Posterior vena cava (tissue), 2 donors: ENCODE measurements at regions of chr3 and their contacts with region 1.

Region 1: GRCh38 chr3:129183569-129184395 is at the start of gene CNBP:
- DNase-seq: peak; percentile 98
- total RNA-seq, gene CNBP: 267 to 284 TPM

Region 2: DNA sequence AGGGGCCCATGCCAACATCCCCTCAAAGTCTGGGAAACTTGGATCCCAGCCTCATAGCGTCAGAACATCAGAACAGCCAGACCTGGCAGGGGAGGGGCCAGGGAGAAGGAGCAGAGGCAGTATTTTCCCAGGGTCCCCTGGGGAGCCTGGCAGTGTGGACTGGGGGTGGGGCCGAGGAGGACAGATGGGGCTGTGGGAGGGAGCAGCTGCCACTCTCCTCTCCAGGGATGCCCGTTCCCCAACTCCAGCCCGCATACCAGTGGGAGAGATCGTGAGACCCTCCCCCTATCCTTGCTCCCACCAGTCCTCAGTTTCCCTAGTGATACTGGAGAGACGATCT is 710.6 kb before region 1 on chr3:
- intact Hi-C with region 1: no loop called
- DNase-seq: no peak

Region 3: DNA sequence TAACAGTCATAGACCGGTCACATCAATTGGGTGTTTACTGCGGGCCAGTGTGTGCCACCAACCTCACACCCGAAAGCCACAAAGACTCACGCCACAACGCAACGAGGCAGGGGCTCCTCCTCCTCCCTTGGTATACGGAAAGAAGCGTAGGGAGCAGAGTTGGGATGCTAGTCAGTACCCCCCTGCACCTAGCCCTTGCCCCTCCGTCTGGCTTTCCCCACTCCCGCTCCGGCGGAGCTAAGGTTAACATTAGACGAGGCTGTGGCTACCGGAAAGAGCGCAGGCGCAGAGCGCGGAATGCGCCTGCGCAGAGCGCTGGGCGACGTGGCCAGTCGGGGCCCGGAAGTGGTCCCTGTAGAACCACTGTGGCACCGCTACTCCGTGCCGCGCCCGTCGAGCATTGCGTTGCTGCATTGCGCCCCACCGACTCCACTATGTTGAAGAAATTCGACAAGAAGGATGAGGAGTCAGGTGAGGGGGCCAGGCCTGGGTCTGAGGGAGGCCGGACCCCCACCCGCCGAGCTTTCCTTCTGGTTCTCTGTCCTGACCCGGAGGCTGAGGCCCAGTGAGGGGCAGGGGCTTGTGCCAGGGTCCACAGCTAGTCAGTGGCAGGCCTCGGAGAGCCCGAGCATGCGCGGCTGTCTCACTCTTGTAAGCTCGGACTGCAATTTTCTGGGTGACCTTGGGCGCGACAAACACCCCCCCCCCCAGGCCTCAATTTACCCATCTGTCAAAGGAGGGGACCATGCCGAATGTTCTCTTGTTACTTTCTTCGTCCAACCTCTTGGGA is 65.7 kb after region 1 on chr3 and contains the start of gene COPG1:
- intact Hi-C with region 1: loop called in 1 of 2 experiments (anchors 5 kb)
- DNase-seq: peak; percentile 95
- total RNA-seq, gene COPG1: 139 to 143 TPM